ENCODE measurements at regions of chr1 and their contacts with region 1.

Region 1: DNA sequence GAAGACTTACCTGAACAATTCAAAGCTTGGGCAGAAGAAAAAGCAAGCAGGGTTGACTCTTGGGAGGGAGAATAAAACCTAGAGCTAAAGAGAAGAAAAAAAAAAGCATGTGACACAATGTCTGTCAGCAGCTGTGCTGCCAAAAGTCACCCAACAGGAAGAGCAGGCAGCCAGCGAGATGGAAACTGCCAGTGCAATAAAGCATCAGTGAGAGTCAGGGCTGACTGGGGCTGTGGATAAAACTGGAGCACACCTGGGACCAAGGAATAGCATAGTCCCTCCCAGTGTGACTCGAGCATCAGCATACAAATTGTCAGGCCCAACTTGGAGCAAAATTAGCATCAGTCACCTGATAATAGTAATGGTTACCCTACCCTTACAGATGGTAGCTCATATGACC is 65.0 kb upstream of the SLC22A15 start:
- DNase-seq: no peak
- ATAC-seq: no peak
- H3K4me3 ChIP-seq: no peak overlapping the region
- H3K27ac ChIP-seq: no peak overlapping the region
- H3K4me1 ChIP-seq: no peaks in the 10 kb centered on the region
- H3K27me3 ChIP-seq: no peaks in the 10 kb centered on the region
- CTCF ChIP-seq: no peak
- POLR2A ChIP-seq: no peak
- RAD21 ChIP-seq: no peak

Region 2: GRCh38 chr1:115976062-115976920 is 65.0 kb after region 1 on chr1 and contains the start of gene SLC22A15:
- CTCF ChIA-PET with region 1: no interaction called
- POLR2A ChIA-PET with region 1: no interaction called
- dilution Hi-C with region 1: no loop called
- in situ Hi-C with region 1: loop called (anchors 10 kb)
- intact Hi-C with region 1: no loop called
- DNase-seq: no peak
- ATAC-seq: peak; percentile 88
- H3K4me3 ChIP-seq: peak within 1 kb of the TSS; percentile 35
- H3K27ac ChIP-seq: no peak within 1 kb of the TSS
- H3K4me1 ChIP-seq: no peaks in the 10 kb centered on the region
- H3K27me3 ChIP-seq: peaks cover 23% of the 10 kb centered on the region
- CTCF ChIP-seq: no peak
- POLR2A ChIP-seq: no peak
- RAD21 ChIP-seq: no peak
- total RNA-seq, gene SLC22A15: under 0.01 TPM in 2 replicates

Region 3: DNA sequence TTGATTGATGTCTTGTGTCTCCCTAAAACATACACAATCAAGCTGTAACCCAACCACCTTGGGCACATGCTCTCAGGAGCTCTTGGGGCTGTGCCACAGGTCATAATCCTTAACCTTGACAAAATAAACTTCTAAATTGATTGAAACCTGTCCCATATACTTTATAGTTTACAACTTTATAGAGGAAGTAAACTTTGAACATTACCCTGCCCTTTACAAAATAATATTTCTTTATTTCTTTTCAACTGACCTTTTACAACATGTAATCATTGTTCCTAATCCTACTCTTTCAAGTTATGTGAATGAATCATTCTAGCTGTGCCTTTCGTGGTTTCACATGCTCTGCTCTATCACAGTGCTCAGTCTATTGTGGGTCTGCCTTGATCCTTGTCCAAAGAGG is 343.5 kb after region 1 on chr1:
- CTCF ChIA-PET with region 1: no interaction called
- POLR2A ChIA-PET with region 1: no interaction called
- dilution Hi-C with region 1: no loop called
- in situ Hi-C with region 1: no loop called
- intact Hi-C with region 1: no loop called
- DNase-seq: no peak
- ATAC-seq: no peak
- H3K4me3 ChIP-seq: no peak overlapping the region
- H3K27ac ChIP-seq: no peak overlapping the region
- H3K4me1 ChIP-seq: no peaks in the 10 kb centered on the region
- H3K27me3 ChIP-seq: no peaks in the 10 kb centered on the region
- CTCF ChIP-seq: no peak
- POLR2A ChIP-seq: no peak
- RAD21 ChIP-seq: no peak

Measured in IMR-90 (cell line).